Activated CD4-positive, alpha-beta T cell treated with anti-CD3 and anti-CD28 coated beads, Interleukin-2, amount 10 ng/mL, durations not matched to agents 7 days and 5 days (primary cell): ENCODE measurements at regions of chr1 and their contacts with region 1.

Region 1: GRCh38 chr1:78145105-78145580 is 99.4 kb downstream of the GIPC2 start:
- DNase-seq: peak; percentile 44
- H3K4me3 Mint-ChIP-seq: no peak overlapping the region
- H3K27ac Mint-ChIP-seq: no peak overlapping the region
- H3K4me1 Mint-ChIP-seq: peaks cover 22% of the 10 kb centered on the region
- H3K27me3 Mint-ChIP-seq: peaks cover 20% of the 10 kb centered on the region

Region 2: GRCh38 chr1:78132174-78132947 is 12.8 kb before region 1 on chr1:
- CTCF ChIA-PET with region 1: interaction called, 20 read pairs
- POLR2A ChIA-PET with region 1: no interaction called
- DNase-seq: no peak
- H3K4me3 Mint-ChIP-seq: no peak overlapping the region
- H3K27ac Mint-ChIP-seq: no peak overlapping the region
- H3K4me1 Mint-ChIP-seq: no peaks in the 10 kb centered on the region
- H3K27me3 Mint-ChIP-seq: peaks cover 7% of the 10 kb centered on the region

Region 3: DNA sequence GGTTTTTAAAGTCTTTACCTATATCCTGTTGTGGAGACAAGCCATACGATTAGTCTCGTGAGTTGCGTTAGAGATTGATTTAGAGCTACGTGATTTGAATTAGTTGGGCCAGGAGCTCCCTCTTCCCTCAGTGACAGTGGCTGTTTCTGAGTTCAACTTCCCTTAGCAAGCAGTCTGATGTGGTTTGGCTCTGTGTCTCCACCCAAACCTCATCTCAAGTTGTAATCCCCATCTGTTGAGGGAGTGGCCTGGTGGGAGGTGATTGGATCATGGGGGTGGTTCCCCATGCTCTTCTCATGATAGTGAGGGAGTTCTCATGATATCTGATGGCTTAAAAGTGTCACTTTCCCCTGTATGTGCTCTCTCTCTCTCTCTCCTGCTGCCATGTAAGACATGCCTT is 152.7 kb after region 1 on chr1:
- CTCF ChIA-PET with region 1: no interaction called
- POLR2A ChIA-PET with region 1: no interaction called
- DNase-seq: no peak
- H3K4me3 Mint-ChIP-seq: no peak overlapping the region
- H3K27ac Mint-ChIP-seq: no peak overlapping the region
- H3K4me1 Mint-ChIP-seq: peaks cover 4% of the 10 kb centered on the region
- H3K27me3 Mint-ChIP-seq: no peaks in the 10 kb centered on the region